ENCODE measurements at regions of chr5 and their contacts with region 1.

Region 1: DNA sequence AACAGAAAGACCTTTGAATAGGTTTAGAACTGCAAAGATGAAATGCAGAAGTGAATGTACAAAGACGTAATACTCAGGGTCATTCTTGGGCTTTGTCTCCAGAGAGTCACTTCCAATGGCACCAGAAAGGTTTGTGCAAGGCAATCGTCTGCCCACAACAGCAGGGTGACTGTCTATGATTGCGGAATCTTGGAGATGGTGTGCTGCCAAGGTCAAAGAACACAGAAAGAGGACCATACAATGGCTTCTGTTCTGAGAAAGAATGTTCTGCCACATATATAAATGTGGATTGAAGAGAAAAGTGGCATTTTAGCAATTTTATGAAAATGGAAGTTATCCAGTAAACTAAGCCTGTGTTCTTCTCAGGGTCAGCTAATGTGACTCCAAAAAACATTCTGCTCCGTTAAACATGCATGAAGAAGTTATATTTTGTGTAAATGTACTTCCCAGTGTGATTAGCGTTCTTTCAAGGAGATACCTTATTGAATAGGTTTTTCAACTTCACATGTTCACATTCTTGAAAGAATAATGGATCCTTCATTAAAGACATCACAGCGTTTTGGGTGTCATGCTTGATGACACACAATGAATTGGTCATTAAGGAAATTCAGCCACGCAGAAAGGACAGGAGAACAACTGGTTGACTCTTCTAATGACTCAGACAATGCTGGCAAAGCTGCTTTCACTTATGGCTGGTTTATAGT is 73.4 kb upstream of the CDH6 start:
- DNase-seq: no peak
- H3K4me3 ChIP-seq: no peak overlapping the region
- CTCF ChIP-seq: no peak
- POLR2A ChIP-seq: no peak

Region 2: GRCh38 chr5:31066655-31067328 is 53.3 kb before region 1 on chr5:
- intact Hi-C with region 1: loop called (anchors 2 kb)
- DNase-seq: no peak
- H3K4me3 ChIP-seq: no peak overlapping the region
- CTCF ChIP-seq: no peak
- POLR2A ChIP-seq: no peak

Region 3: GRCh38 chr5:31269259-31269658 is 149.2 kb after region 1 on chr5:
- intact Hi-C with region 1: no loop called
- DNase-seq: no peak
- H3K4me3 ChIP-seq: no peak overlapping the region
- CTCF ChIP-seq: no peak
- POLR2A ChIP-seq: no peak